ENCODE measurements at regions of chr1 and their contacts with region 1.

Region 1: GRCh38 chr1:212477014-212477679 is 44.4 kb downstream of the NENF start:
- DNase-seq: peak; percentile 88 to 93 (median 91)
- ATAC-seq: peak; percentile 97
- H3K4me3 ChIP-seq: no peak overlapping the region
- H3K27ac ChIP-seq: no peak overlapping the region
- H3K4me1 ChIP-seq: peaks cover 3 to 12% of the 10 kb centered on the region in 2 experiments; a peak in 4 of 5 replicates
- H3K27me3 ChIP-seq: peaks cover 11 to 42% of the 10 kb centered on the region in 2 experiments; a peak in 4 of 5 replicates
- CTCF ChIP-seq: peak; percentile 96 to 98 (median 97)
- EP300 ChIP-seq: no peak; the same call in 1 of the 2 replicates
- POLR2A ChIP-seq: no peak
- RAD21 ChIP-seq: peak; percentile 97 to 98

Region 2: DNA sequence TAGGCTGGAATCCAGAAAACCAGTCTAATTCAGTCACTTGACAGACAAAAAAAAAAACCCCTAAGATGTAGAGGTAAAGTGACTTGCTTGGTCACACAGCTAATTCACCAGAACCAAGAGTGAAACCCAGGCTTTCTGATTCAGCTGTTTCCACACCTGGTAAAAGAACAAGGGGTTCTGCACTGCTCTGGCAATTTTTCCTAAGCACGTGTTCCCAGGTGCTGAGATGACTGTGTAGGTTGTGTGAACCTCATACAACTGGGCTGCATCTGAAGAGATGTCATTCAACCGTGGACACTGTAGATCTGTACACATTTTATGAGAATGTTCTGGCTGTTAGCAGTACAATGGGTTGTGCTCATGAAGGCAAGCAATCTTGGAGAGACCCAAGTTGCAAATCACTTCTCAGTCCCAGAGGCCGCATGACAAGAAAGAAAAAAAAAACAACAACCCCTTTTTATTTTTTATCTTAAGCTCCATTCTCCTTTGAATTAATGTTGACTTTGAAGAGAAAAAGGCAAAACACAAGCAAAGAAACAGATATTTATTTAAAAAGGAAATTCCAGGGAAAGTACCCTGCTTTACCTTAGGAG is 537.2 kb before region 1 on chr1:
- CTCF ChIA-PET with region 1: no interaction called
- POLR2A ChIA-PET with region 1: no interaction called
- in situ Hi-C with region 1: no loop called
- intact Hi-C with region 1: no loop called
- DNase-seq: no peak
- ATAC-seq: peak; percentile 32
- H3K4me3 ChIP-seq: no peak overlapping the region
- H3K27ac ChIP-seq: no peak overlapping the region
- H3K4me1 ChIP-seq: no peaks in the 10 kb centered on the region; a peak in 1 of 5 replicates
- H3K27me3 ChIP-seq: no peaks in the 10 kb centered on the region
- CTCF ChIP-seq: no peak
- EP300 ChIP-seq: no peak
- POLR2A ChIP-seq: no peak
- RAD21 ChIP-seq: no peak

Region 3: GRCh38 chr1:212542761-212543187 is 65.6 kb after region 1 on chr1:
- CTCF ChIA-PET with region 1: no interaction called
- POLR2A ChIA-PET with region 1: no interaction called
- in situ Hi-C with region 1: no loop called
- intact Hi-C with region 1: loop called (anchors 5 kb)
- DNase-seq: no peak
- ATAC-seq: peak; percentile 57
- H3K4me3 ChIP-seq: no peak overlapping the region
- H3K27ac ChIP-seq: no peak overlapping the region
- H3K4me1 ChIP-seq: no peaks in the 10 kb centered on the region
- H3K27me3 ChIP-seq: peaks cover 17 to 22% of the 10 kb centered on the region in 2 experiments; a peak in 4 of 5 replicates
- CTCF ChIP-seq: no peak
- EP300 ChIP-seq: no peak
- POLR2A ChIP-seq: no peak
- RAD21 ChIP-seq: no peak

Region 4: DNA sequence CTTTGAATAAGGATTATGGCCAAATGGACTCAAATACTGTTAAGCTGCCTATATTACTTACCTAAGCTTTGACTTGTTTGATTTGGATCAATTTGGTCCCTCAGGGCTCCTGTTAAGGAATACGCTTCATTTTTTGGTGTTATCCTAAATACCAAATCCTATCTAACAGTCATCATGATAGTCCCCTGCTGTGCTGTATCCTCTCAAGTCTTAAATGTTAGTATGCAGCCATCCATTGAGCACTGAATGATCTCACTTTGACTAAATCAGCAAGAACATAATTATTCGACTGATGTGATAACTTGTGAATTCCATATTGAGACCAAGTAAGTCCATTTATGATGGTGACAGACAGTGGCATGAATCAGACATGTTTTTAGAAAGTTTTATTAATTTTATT is 78.3 kb after region 1 on chr1:
- CTCF ChIA-PET with region 1: no interaction called
- POLR2A ChIA-PET with region 1: no interaction called
- in situ Hi-C with region 1: no loop called
- intact Hi-C with region 1: no loop called
- DNase-seq: no peak
- ATAC-seq: no peak
- H3K4me3 ChIP-seq: no peak overlapping the region
- H3K27ac ChIP-seq: no peak overlapping the region
- H3K4me1 ChIP-seq: peaks cover 14 to 16% of the 10 kb centered on the region in 2 experiments
- H3K27me3 ChIP-seq: no peaks in the 10 kb centered on the region
- CTCF ChIP-seq: no peak
- EP300 ChIP-seq: no peak
- POLR2A ChIP-seq: no peak
- RAD21 ChIP-seq: no peak

Region 5: GRCh38 chr1:212630158-212630900 is 153.2 kb after region 1 on chr1:
- CTCF ChIA-PET with region 1: interaction called, 10 read pairs
- POLR2A ChIA-PET with region 1: no interaction called
- in situ Hi-C with region 1: no loop called
- intact Hi-C with region 1: loop called (anchors 2 kb)
- DNase-seq: peak; percentile 78 to 85 (median 83)
- ATAC-seq: peak; percentile 97
- H3K4me3 ChIP-seq: no peak overlapping the region
- H3K27ac ChIP-seq: no peak overlapping the region
- H3K4me1 ChIP-seq: peaks cover 5 to 11% of the 10 kb centered on the region in 2 experiments
- H3K27me3 ChIP-seq: peaks cover 38 to 57% of the 10 kb centered on the region in 2 experiments
- CTCF ChIP-seq: peak; percentile 88 to 96 (median 89)
- EP300 ChIP-seq: no peak
- POLR2A ChIP-seq: no peak
- RAD21 ChIP-seq: peak; percentile 63 to 76

Region 6: GRCh38 chr1:212718499-212718898 is 241.4 kb after region 1 on chr1:
- CTCF ChIA-PET with region 1: interaction called, 3 read pairs
- POLR2A ChIA-PET with region 1: no interaction called
- in situ Hi-C with region 1: no loop called
- intact Hi-C with region 1: loop called (anchors 1 kb)
- DNase-seq: no peak
- ATAC-seq: peak; percentile 44
- H3K4me3 ChIP-seq: no peak overlapping the region
- H3K27ac ChIP-seq: no peak overlapping the region
- H3K4me1 ChIP-seq: peaks cover 3 to 15% of the 10 kb centered on the region in 2 experiments; a peak in 4 of 5 replicates
- H3K27me3 ChIP-seq: no peaks in the 10 kb centered on the region
- CTCF ChIP-seq: peak in 2 of 3 experiments; percentile 15 to 40; a peak in 2 of 6 replicates
- EP300 ChIP-seq: no peak
- POLR2A ChIP-seq: no peak
- RAD21 ChIP-seq: peak in 1 of 2 experiments; percentile 60; a peak in 2 of 4 replicates

Region 7: GRCh38 chr1:212994926-212995325 is 517.8 kb after region 1 on chr1:
- CTCF ChIA-PET with region 1: interaction called, 4 read pairs
- POLR2A ChIA-PET with region 1: no interaction called
- in situ Hi-C with region 1: no loop called
- intact Hi-C with region 1: loop called (anchors 1 kb)
- DNase-seq: no peak
- ATAC-seq: no peak
- H3K4me3 ChIP-seq: no peak overlapping the region
- H3K27ac ChIP-seq: no peak overlapping the region
- H3K4me1 ChIP-seq: no peaks in the 10 kb centered on the region
- H3K27me3 ChIP-seq: no peaks in the 10 kb centered on the region
- CTCF ChIP-seq: no peak
- EP300 ChIP-seq: no peak
- POLR2A ChIP-seq: no peak
- RAD21 ChIP-seq: no peak